GM12878 (cell line): ENCODE measurements at regions of chr14 and their contacts with region 1.

Region 1: GRCh38 chr14:75577729-75578101 is 705 bp upstream of the FLVCR2 start:
- DNase-seq: peak; percentile 34
- ATAC-seq: peak; percentile 97
- H3K4me3 ChIP-seq: peak overlapping the region; percentile 74
- H3K27ac ChIP-seq: peak overlapping the region; percentile 40; the same call in 1 of the 2 replicates
- H3K4me1 ChIP-seq: peaks cover 7% of the 10 kb centered on the region; the same call in 1 of the 2 replicates
- H3K27me3 ChIP-seq: no peaks in the 10 kb centered on the region
- CTCF ChIP-seq: peak; percentile 76 to 84 (median 81)
- EP300 ChIP-seq: no peak
- POLR2A ChIP-seq: no peak
- RAD21 ChIP-seq: peak; percentile 78

Region 2: GRCh38 chr14:75372260-75372659 is 205.5 kb before region 1 on chr14:
- CTCF ChIA-PET with region 1: no interaction called
- POLR2A ChIA-PET with region 1: no interaction called
- RAD21 ChIA-PET with region 1: no interaction called
- SMC1A ChIA-PET with region 1: no interaction called
- in situ Hi-C with region 1: no loop called
- intact Hi-C with region 1: no loop called
- DNase-seq: no peak
- ATAC-seq: no peak
- H3K4me3 ChIP-seq: no peak overlapping the region
- H3K27ac ChIP-seq: no peak overlapping the region
- H3K4me1 ChIP-seq: peaks cover 3% of the 10 kb centered on the region; the same call in 1 of the 2 replicates
- H3K27me3 ChIP-seq: no peaks in the 10 kb centered on the region
- CTCF ChIP-seq: no peak
- EP300 ChIP-seq: no peak
- POLR2A ChIP-seq: no peak
- RAD21 ChIP-seq: no peak

Region 3: DNA sequence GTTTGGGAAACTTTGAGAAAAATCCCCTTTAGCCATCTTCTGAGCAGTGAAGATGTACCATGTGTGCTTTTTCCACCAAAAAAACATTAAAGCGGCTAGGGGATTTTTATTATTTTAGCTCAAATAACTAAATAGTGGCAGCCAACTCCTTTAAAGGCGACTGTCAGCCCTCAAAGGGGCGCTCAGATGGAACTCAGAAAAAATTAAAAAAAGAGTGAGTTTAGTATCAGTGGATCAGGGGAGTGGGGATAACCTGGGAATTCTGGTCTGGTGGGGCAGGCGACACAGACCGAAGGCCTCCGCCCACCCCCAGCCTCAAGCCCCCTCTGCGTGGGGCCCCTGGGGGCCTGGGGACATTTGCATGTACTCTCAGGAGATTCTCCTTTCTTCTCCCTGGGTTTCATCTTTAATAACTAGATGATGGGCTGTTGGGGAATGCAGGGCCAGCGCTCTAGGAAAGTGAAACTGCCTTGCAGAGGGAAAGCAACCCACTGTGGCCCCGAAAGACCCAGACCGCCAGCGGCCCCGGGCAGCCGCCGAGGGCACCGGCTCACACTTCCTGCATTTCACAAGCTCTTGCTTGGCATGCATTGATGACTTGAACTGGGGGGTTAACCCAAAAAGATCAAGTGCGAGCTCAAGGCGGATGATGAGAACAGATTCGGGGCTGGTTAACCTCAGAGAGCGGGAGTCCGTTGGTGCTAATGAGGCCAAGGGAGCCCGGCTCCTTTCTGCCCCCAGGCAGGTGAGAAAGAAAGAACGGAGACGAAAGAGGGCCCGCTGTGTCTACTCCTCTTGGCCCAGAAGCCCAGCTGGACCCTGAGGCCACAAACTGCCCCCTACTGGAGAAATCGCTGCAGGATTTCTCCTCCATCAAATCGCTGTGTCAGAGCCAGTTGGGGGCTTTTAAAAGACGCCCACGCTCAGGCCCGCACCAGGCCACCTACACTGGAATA is 62.8 kb before region 1 on chr14:
- CTCF ChIA-PET with region 1: interaction called, 154 read pairs
- POLR2A ChIA-PET with region 1: interaction called, 9 read pairs
- RAD21 ChIA-PET with region 1: interaction called, 28 read pairs
- SMC1A ChIA-PET with region 1: interaction called, 52 read pairs
- in situ Hi-C with region 1: no loop called
- intact Hi-C with region 1: no loop called
- DNase-seq: peak; percentile 80
- ATAC-seq: peak; percentile 76
- H3K4me3 ChIP-seq: peak overlapping the region; percentile 73
- H3K27ac ChIP-seq: peak overlapping the region; percentile 97
- H3K4me1 ChIP-seq: peaks cover 54% of the 10 kb centered on the region
- H3K27me3 ChIP-seq: no peaks in the 10 kb centered on the region
- CTCF ChIP-seq: no peak
- EP300 ChIP-seq: peak in 1 of 2 experiments; percentile 73; a peak in 3 of 4 replicates
- POLR2A ChIP-seq: 0 out of 2 replicates have a peak, but pooled peaks have one; percentile 36
- RAD21 ChIP-seq: no peak

Region 4: DNA sequence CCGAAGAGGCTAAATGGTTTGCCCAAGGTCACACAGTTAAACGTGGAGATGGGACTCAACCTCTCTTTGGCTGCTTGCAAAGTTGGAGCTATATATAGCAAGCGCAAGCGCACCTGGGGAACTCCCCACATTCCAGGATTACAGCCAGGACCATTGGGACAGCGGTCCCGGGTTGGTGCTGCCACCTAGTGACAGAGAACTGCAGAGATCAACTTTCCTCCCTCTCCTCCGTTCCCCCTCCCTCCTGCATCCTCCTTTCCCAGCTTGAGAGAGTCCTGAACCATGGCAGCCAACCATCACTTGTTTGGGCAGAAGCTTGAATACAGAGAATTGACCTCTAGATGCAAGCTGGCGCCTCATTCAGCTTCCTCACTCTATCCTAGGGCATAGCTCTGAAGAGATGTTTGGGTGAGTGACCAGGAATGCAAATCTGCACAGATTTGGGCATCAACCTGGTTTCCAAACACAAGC is 16.7 kb before region 1 on chr14:
- CTCF ChIA-PET with region 1: interaction called, 61 read pairs
- POLR2A ChIA-PET with region 1: interaction called, 9 read pairs
- RAD21 ChIA-PET with region 1: interaction called, 18 read pairs
- SMC1A ChIA-PET with region 1: interaction called, 41 read pairs
- in situ Hi-C with region 1: no loop called
- intact Hi-C with region 1: no loop called
- DNase-seq: no peak
- ATAC-seq: peak; percentile 77
- H3K4me3 ChIP-seq: no peak overlapping the region
- H3K27ac ChIP-seq: no peak overlapping the region
- H3K4me1 ChIP-seq: peaks cover 27% of the 10 kb centered on the region
- H3K27me3 ChIP-seq: no peaks in the 10 kb centered on the region
- CTCF ChIP-seq: peak; percentile 84 to 91 (median 86)
- EP300 ChIP-seq: no peak
- POLR2A ChIP-seq: no peak
- RAD21 ChIP-seq: peak; percentile 82

Region 5: GRCh38 chr14:75619548-75619947 is 41.8 kb after region 1 on chr14:
- CTCF ChIA-PET with region 1: interaction called, 29 read pairs
- POLR2A ChIA-PET with region 1: interaction called, 3 read pairs
- RAD21 ChIA-PET with region 1: interaction called, 19 read pairs
- SMC1A ChIA-PET with region 1: interaction called, 43 read pairs
- in situ Hi-C with region 1: no loop called
- intact Hi-C with region 1: no loop called
- DNase-seq: no peak
- ATAC-seq: no peak
- H3K4me3 ChIP-seq: no peak overlapping the region
- H3K27ac ChIP-seq: no peak overlapping the region
- H3K4me1 ChIP-seq: no peaks in the 10 kb centered on the region
- H3K27me3 ChIP-seq: no peaks in the 10 kb centered on the region
- CTCF ChIP-seq: no peak
- EP300 ChIP-seq: no peak
- POLR2A ChIP-seq: no peak
- RAD21 ChIP-seq: no peak

Region 6: GRCh38 chr14:75660630-75661494 is 83.1 kb after region 1 on chr14 and contains the starts of genes ERG28 and TTLL5:
- CTCF ChIA-PET with region 1: interaction called, 578 read pairs
- POLR2A ChIA-PET with region 1: interaction called, 10 read pairs
- RAD21 ChIA-PET with region 1: interaction called, 320 read pairs
- SMC1A ChIA-PET with region 1: interaction called, 375 read pairs
- in situ Hi-C with region 1: no loop called
- intact Hi-C with region 1: no loop called
- DNase-seq: peak; percentile 99
- ATAC-seq: peak; percentile 99
- H3K4me3 ChIP-seq: peak within 1 kb of the TSS; percentile 89
- H3K27ac ChIP-seq: peak within 1 kb of the TSS; percentile 49
- H3K4me1 ChIP-seq: no peaks in the 10 kb centered on the region
- H3K27me3 ChIP-seq: no peaks in the 10 kb centered on the region
- CTCF ChIP-seq: no peak
- EP300 ChIP-seq: 0 out of 4 replicates have a peak, but pooled peaks of 1 of the 2 experiments have one; percentile 16
- POLR2A ChIP-seq: peak; percentile 82
- RAD21 ChIP-seq: no peak
- polyA plus RNA-seq, gene ERG28: 52.6 to 67.0 TPM
- polyA plus RNA-seq, gene TTLL5: 3.2 to 5.2 TPM

Region 7: DNA sequence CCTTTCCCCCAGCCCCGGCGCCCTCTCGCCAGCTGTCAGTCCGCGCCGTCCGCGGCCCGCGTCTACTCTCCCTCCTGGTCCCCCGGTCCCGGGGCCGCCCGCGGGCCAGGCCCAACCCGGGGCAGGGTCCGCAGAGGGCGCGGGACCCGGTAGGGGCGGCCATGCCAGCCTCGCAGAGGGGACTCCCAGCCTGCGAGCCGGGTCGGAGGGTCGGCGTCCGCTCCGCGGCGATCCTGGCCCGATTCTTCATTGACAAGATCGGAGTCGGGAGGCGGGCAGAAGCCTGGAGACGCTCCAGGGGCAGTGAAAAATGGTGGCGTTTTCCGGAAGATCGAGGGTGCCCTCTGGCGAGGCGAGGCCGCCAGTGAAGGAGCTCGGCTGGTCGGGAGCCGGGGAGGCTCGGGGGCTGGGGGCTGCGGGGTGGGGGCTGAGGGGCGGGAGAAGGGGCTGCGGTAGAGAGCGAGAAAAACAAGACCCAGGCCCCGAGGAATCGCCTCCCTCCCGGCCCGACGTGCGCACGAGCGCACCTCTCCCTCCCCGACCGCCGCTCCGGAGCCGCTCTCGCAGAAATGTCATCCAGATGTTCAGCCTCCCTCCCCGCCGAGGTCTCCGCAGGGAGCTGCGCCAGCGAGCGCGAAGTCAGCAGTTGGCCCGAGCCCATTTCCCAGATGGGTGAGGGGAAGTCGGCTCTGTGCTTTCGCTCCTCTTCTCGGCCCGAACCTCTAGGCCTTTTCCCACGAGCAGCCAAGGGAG is 404.7 kb after region 1 on chr14:
- CTCF ChIA-PET with region 1: interaction called, 21 read pairs
- POLR2A ChIA-PET with region 1: no interaction called
- RAD21 ChIA-PET with region 1: interaction called, 5 read pairs
- SMC1A ChIA-PET with region 1: interaction called, 7 read pairs
- in situ Hi-C with region 1: loop called (anchors 10 kb)
- intact Hi-C with region 1: loop called (anchors 10 kb)
- DNase-seq: no peak
- ATAC-seq: peak; percentile 81
- H3K4me3 ChIP-seq: peak overlapping the region; percentile 92
- H3K27ac ChIP-seq: 0 out of 2 replicates have a peak overlapping the region, but pooled peaks have one; percentile 47
- H3K4me1 ChIP-seq: peaks cover 24% of the 10 kb centered on the region
- H3K27me3 ChIP-seq: no peaks in the 10 kb centered on the region; a peak in 1 of 4 replicates
- CTCF ChIP-seq: peak; percentile 57 to 79 (median 77)
- EP300 ChIP-seq: no peak
- POLR2A ChIP-seq: no peak
- RAD21 ChIP-seq: peak; percentile 80